ENCODE measurements at regions of chr12 and their contacts with region 1.

Region 1: DNA sequence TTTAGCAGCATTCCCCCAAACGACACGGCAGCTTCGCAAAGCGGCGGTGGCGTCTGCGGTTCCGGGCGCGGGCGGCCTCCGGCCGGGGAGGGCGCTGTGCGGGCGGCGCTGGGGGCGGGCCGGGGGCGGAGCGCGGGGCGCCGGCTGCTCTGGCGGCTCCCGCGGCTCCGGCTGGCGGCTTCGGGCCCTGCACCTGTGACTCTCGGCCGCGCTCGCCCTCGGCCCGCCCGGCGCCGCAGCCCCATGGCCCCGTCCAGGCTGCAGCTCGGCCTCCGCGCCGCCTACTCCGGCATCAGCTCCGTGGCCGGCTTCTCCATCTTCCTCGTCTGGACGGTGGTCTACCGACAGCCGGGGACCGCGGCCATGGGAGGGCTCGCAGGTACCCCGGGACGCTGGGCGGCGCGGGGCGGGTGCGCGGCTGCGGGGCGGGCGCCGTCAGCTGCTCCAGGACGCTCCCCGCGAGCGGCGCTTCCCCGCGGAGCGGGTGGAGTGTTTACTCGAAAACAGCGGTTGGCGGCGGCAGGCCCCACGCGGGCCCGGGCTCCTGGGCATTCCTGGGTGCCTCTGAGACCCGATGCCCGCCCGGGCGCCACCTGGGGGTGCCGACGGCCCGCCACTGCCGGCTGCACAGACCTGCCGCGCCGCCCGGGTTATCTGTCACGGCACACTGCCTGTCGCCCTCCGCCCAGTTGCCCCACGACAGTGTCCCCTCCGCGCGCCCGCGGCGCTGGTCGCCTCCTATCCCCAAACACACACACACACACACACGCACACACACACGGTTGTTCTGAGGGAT is at the start of gene SLC48A1:
- DNase-seq: peak in 1 of 2 experiments; percentile 85
- H3K4me3 ChIP-seq: peak within 1 kb of the TSS; percentile 55 to 91 (median 56)
- H3K27ac ChIP-seq: no peak within 1 kb of the TSS
- H3K4me1 ChIP-seq: peaks cover 9 to 17% (median 12%) of the 10 kb centered on the region in 4 experiments
- H3K27me3 ChIP-seq: peaks cover 0 to 17% (median 8%) of the 10 kb centered on the region in 4 experiments; a peak in 4 of 7 replicates
- CTCF ChIP-seq: peak in 2 of 3 experiments; percentile 38 to 55; a peak in 3 of 4 replicates
- EP300 ChIP-seq: no peak
- POLR2A ChIP-seq: no peak
- RAD21 ChIP-seq: 0 out of 4 replicates have a peak, but pooled peaks of 1 of the 2 experiments have one; percentile 2
- total RNA-seq, gene SLC48A1: 14.0 and 14.1 TPM in 2 replicates

Region 2: GRCh38 chr12:47758834-47759690 is 14.2 kb before region 1 on chr12 and contains the start of gene RAPGEF3:
- CTCF ChIA-PET with region 1: interaction called, 2,442 read pairs
- POLR2A ChIA-PET with region 1: interaction called, 78 read pairs
- DNase-seq: peak in 1 of 2 experiments; percentile 81
- H3K4me3 ChIP-seq: peak within 1 kb of the TSS; percentile 32 to 72 (median 45)
- H3K27ac ChIP-seq: no peak within 1 kb of the TSS
- H3K4me1 ChIP-seq: peaks cover 6 to 15% (median 10%) of the 10 kb centered on the region in 4 experiments; a peak in 6 of 7 replicates
- H3K27me3 ChIP-seq: peaks cover 0 to 2% (median 0%) of the 10 kb centered on the region in 4 experiments; a peak in 2 of 7 replicates
- CTCF ChIP-seq: peak; percentile 46 to 60 (median 49); a peak in 3 of 4 replicates
- EP300 ChIP-seq: peak in 1 of 2 experiments; percentile 33; a peak in 1 of 3 replicates
- POLR2A ChIP-seq: no peak; a peak in 1 of 3 replicates
- RAD21 ChIP-seq: peak; percentile 29 to 35
- total RNA-seq, gene RAPGEF3: 6.7 and 9.4 TPM in 2 replicates

Measured in H1 (cell line).